ENCODE measurements at regions of chr20 and their contacts with region 1.

Region 1: DNA sequence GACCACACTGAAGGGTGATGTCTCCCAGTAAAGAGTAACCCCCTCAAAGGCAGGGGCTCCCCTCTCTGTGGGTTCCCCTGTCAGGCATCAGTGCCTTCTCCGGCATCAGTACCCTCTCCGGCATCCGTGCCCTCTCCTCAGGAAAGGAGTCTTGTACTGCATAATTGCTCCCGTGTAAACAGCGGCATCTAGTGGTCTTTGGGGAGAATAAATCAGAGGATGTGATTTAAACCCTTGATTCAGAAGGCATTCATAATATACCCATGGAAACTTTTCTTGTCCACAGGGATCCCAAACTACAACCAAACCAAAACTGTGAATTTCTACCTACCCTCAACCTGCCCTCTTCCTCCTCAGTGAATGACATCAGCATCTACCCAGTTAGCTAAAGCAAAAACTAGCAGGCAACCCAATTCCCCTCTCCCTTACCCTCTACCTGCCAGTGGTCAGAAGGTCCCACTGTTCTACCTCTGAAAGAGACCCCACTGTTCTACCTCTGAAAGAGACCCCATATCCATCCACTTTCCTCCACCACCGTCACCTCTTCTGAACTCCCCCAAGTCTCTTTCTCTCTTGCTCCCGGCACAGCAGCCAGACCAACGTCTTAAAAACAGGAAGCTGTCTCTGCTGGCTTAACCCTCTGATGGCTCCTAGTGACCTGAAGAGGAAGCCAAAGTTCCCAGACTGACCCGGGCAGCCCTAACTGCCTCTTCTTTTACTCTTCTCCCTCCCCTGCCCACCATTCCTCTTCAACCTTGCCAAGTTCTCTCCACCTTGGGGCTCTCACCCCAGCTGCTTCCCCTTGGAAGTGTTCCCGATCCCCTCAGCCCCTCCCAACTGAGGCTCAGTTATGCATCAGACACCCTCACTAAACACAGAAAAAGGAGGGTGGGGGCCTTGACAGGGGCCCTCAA is 27.2 kb downstream of the UBE2V1 start:
- DNase-seq: no peak
- ATAC-seq: peak; percentile 95
- H3K4me3 ChIP-seq: no peak overlapping the region
- H3K27ac ChIP-seq: peak overlapping the region; percentile 26; the same call in 1 of the 2 replicates
- H3K4me1 ChIP-seq: peaks cover 6% of the 10 kb centered on the region
- H3K27me3 ChIP-seq: no peaks in the 10 kb centered on the region
- CTCF ChIP-seq: peak; percentile 77 to 91 (median 82)
- EP300 ChIP-seq: no peak
- POLR2A ChIP-seq: 0 out of 2 replicates have a peak, but pooled peaks have one; percentile 11
- RAD21 ChIP-seq: peak; percentile 62

Region 2: GRCh38 chr20:49936153-49937027 is 149.3 kb before region 1 on chr20 and contains the start of gene RNF114:
- CTCF ChIA-PET with region 1: interaction called, 13 read pairs
- POLR2A ChIA-PET with region 1: no interaction called
- RAD21 ChIA-PET with region 1: no interaction called
- SMC1A ChIA-PET with region 1: no interaction called
- in situ Hi-C with region 1: no loop called
- intact Hi-C with region 1: no loop called
- DNase-seq: no peak
- ATAC-seq: peak; percentile 85
- H3K4me3 ChIP-seq: peak within 1 kb of the TSS; percentile 90
- H3K27ac ChIP-seq: peak within 1 kb of the TSS; percentile 85
- H3K4me1 ChIP-seq: peaks cover 17% of the 10 kb centered on the region
- H3K27me3 ChIP-seq: no peaks in the 10 kb centered on the region
- CTCF ChIP-seq: no peak; a peak in 1 of 6 replicates
- EP300 ChIP-seq: no peak; a peak in 1 of 4 replicates
- POLR2A ChIP-seq: peak; percentile 97
- RAD21 ChIP-seq: no peak
- polyA plus RNA-seq, gene RNF114: 28.0 to 33.2 TPM

Region 3: GRCh38 chr20:50027611-50028105 is 58.1 kb before region 1 on chr20:
- CTCF ChIA-PET with region 1: no interaction called
- POLR2A ChIA-PET with region 1: no interaction called
- RAD21 ChIA-PET with region 1: no interaction called
- SMC1A ChIA-PET with region 1: no interaction called
- in situ Hi-C with region 1: no loop called
- intact Hi-C with region 1: no loop called
- DNase-seq: no peak
- ATAC-seq: no peak
- H3K4me3 ChIP-seq: no peak overlapping the region
- H3K27ac ChIP-seq: no peak overlapping the region
- H3K4me1 ChIP-seq: peaks cover 7% of the 10 kb centered on the region
- H3K27me3 ChIP-seq: peaks cover 0 to 2% of the 10 kb centered on the region in 2 experiments; a peak in 1 of 4 replicates
- CTCF ChIP-seq: no peak
- EP300 ChIP-seq: no peak
- POLR2A ChIP-seq: no peak
- RAD21 ChIP-seq: no peak

Region 4: GRCh38 chr20:50101281-50101680 is 15.6 kb after region 1 on chr20:
- CTCF ChIA-PET with region 1: interaction called, 57 read pairs
- POLR2A ChIA-PET with region 1: no interaction called
- RAD21 ChIA-PET with region 1: interaction called, 4 read pairs
- SMC1A ChIA-PET with region 1: interaction called, 5 read pairs
- in situ Hi-C with region 1: no loop called
- intact Hi-C with region 1: no loop called
- DNase-seq: no peak
- ATAC-seq: no peak
- H3K4me3 ChIP-seq: no peak overlapping the region
- H3K27ac ChIP-seq: no peak overlapping the region
- H3K4me1 ChIP-seq: peaks cover 3% of the 10 kb centered on the region
- H3K27me3 ChIP-seq: no peaks in the 10 kb centered on the region
- CTCF ChIP-seq: no peak
- EP300 ChIP-seq: no peak
- POLR2A ChIP-seq: no peak
- RAD21 ChIP-seq: no peak

Region 5: GRCh38 chr20:50115591-50116372 is 30.1 kb after region 1 on chr20:
- CTCF ChIA-PET with region 1: interaction called, 21 read pairs
- POLR2A ChIA-PET with region 1: no interaction called
- RAD21 ChIA-PET with region 1: interaction called, 3 read pairs
- SMC1A ChIA-PET with region 1: interaction called, 4 read pairs
- in situ Hi-C with region 1: no loop called
- intact Hi-C with region 1: no loop called
- DNase-seq: peak; percentile 89
- ATAC-seq: peak; percentile 80
- H3K4me3 ChIP-seq: peak overlapping the region; percentile 96
- H3K27ac ChIP-seq: peak overlapping the region; percentile 65
- H3K4me1 ChIP-seq: peaks cover 22% of the 10 kb centered on the region
- H3K27me3 ChIP-seq: no peaks in the 10 kb centered on the region
- CTCF ChIP-seq: no peak
- EP300 ChIP-seq: no peak
- POLR2A ChIP-seq: peak; percentile 77
- RAD21 ChIP-seq: no peak

Region 6: GRCh38 chr20:50165684-50166554 is 80.2 kb after region 1 on chr20:
- CTCF ChIA-PET with region 1: interaction called, 12 read pairs
- POLR2A ChIA-PET with region 1: interaction called, 5 read pairs
- RAD21 ChIA-PET with region 1: interaction called, 3 read pairs
- SMC1A ChIA-PET with region 1: interaction called, 3 read pairs
- in situ Hi-C with region 1: no loop called
- intact Hi-C with region 1: no loop called
- DNase-seq: peak; percentile 82
- ATAC-seq: peak; percentile 99
- H3K4me3 ChIP-seq: peak overlapping the region; percentile 40
- H3K27ac ChIP-seq: peak overlapping the region; percentile 57
- H3K4me1 ChIP-seq: peaks cover 6% of the 10 kb centered on the region; the same call in 1 of the 2 replicates
- H3K27me3 ChIP-seq: no peaks in the 10 kb centered on the region
- CTCF ChIP-seq: no peak
- EP300 ChIP-seq: peak in 1 of 2 experiments; percentile 43; a peak in 1 of 4 replicates
- POLR2A ChIP-seq: peak; percentile 79
- RAD21 ChIP-seq: no peak